ENCODE measurements at regions of chr4 and their contacts with region 1.

Region 1: DNA sequence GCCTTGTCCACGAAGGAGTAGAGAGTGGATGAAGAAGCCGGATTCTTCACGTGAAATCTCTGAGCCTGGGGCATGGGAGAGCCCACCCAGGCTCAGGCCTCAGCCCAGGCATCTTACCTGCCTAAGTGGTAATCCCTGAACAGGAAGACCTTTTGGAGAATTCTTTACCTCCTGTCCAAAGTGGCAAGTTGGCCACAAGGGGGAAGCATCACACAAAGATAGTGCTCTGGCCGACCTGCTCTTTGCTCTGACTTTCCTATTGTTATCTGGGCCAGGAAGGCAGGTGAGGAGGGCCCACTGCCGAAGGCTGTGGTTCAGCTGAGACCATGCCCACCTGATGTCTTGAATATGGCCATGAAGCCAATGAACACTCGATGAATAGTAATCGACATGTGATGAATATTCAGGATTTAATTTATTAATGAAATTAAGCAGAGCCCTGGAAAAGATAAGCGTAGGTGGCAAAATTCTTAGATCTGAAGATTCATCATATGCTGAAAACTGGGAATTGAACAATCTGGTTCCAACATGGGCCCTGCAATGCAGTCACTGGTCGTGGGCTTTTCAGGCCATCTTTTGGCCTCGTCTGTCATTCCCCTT is 93.8 kb downstream of the PDGFRA start:
- DNase-seq: peak; percentile 59
- ATAC-seq: peak; percentile 81
- H3K4me3 ChIP-seq: no peak overlapping the region
- H3K27ac ChIP-seq: no peak overlapping the region
- H3K4me1 ChIP-seq: no peaks in the 10 kb centered on the region
- H3K27me3 ChIP-seq: no peaks in the 10 kb centered on the region
- CTCF ChIP-seq: peak; percentile 72
- POLR2A ChIP-seq: no peak
- RAD21 ChIP-seq: peak; percentile 86

Region 2: GRCh38 chr4:54346445-54346844 is 23.5 kb after region 1 on chr4:
- CTCF ChIA-PET with region 1: no interaction called
- POLR2A ChIA-PET with region 1: no interaction called
- dilution Hi-C with region 1: no loop called
- in situ Hi-C with region 1: no loop called
- intact Hi-C with region 1: no loop called
- DNase-seq: no peak
- ATAC-seq: no peak
- H3K4me3 ChIP-seq: no peak overlapping the region
- H3K27ac ChIP-seq: no peak overlapping the region
- H3K4me1 ChIP-seq: no peaks in the 10 kb centered on the region
- H3K27me3 ChIP-seq: peaks cover 13% of the 10 kb centered on the region
- CTCF ChIP-seq: no peak
- POLR2A ChIP-seq: no peak
- RAD21 ChIP-seq: no peak

Region 3: DNA sequence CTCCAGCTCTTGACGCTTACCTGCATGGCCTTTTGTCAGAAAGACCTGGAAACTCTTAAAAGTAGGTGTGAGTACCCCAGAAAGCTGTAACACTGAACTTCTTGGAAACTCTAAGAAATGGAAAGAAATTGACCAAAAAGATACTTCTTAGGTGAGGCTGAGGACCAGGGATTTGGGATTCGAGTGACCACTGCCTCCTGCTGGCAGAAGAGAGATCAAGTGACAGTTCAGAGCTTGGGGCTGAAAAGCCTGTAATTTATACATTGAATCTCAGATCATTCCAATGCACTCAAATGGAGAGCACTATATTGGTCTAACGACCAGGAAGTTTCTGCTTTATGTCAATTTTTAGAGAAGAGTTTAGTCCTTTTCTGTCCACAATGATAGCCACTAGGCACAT is 110.8 kb after region 1 on chr4:
- CTCF ChIA-PET with region 1: interaction called, 4 read pairs
- POLR2A ChIA-PET with region 1: no interaction called
- dilution Hi-C with region 1: no loop called
- in situ Hi-C with region 1: loop called (anchors 5 kb)
- intact Hi-C with region 1: loop called (anchors 2 kb)
- DNase-seq: peak; percentile 37
- ATAC-seq: peak; percentile 77; the same call in 1 of the 2 replicates
- H3K4me3 ChIP-seq: no peak overlapping the region
- H3K27ac ChIP-seq: no peak overlapping the region
- H3K4me1 ChIP-seq: no peaks in the 10 kb centered on the region
- H3K27me3 ChIP-seq: peaks cover 21% of the 10 kb centered on the region
- CTCF ChIP-seq: peak; percentile 50
- POLR2A ChIP-seq: no peak
- RAD21 ChIP-seq: peak; percentile 52

Region 4: DNA sequence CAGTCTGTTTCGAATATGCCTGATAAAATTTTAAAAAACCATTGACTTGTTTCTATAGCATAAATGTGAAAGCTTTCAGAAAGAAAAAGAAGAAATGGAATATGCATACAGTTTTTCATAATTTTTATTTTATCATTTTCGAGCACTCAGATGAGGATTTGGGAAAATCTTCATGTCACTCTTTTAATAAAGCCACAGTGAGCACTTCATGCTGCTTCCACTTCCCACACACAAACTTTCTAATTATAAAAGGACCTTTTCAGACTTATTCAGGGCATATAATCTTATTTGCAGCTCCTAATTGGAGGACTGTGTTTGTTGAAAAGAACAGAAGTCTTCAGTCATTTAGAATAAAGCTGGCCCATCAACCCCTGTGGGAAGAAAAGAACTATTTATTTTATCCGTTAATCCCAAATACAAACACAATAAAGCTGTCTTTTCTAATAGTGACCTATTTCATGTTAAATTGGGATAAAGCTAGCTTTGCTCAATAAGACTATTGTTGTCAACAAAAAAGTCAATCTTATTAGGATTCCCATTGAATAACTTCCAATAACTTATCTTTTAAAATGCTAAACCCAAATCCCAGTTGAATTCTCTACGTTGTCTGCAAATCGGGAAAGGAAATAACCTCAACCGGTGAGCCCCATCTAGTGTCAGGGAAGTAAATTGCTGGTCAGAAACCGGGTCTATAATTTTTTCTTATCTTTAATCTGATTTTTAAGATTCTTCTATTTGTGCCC is 117.6 kb after region 1 on chr4:
- CTCF ChIA-PET with region 1: interaction called, 4 read pairs
- POLR2A ChIA-PET with region 1: no interaction called
- dilution Hi-C with region 1: no loop called
- in situ Hi-C with region 1: loop called (anchors 5 kb)
- intact Hi-C with region 1: loop called (anchors 1 kb)
- DNase-seq: peak; percentile 34
- ATAC-seq: no peak
- H3K4me3 ChIP-seq: no peak overlapping the region
- H3K27ac ChIP-seq: no peak overlapping the region
- H3K4me1 ChIP-seq: no peaks in the 10 kb centered on the region
- H3K27me3 ChIP-seq: peaks cover 13% of the 10 kb centered on the region
- CTCF ChIP-seq: peak; percentile 61
- POLR2A ChIP-seq: no peak
- RAD21 ChIP-seq: peak; percentile 60

Region 5: GRCh38 chr4:54484383-54484782 is 161.5 kb after region 1 on chr4:
- CTCF ChIA-PET with region 1: no interaction called
- POLR2A ChIA-PET with region 1: no interaction called
- dilution Hi-C with region 1: no loop called
- in situ Hi-C with region 1: no loop called
- intact Hi-C with region 1: no loop called
- DNase-seq: no peak
- ATAC-seq: no peak
- H3K4me3 ChIP-seq: no peak overlapping the region
- H3K27ac ChIP-seq: no peak overlapping the region
- H3K4me1 ChIP-seq: no peaks in the 10 kb centered on the region
- H3K27me3 ChIP-seq: no peaks in the 10 kb centered on the region; the same call in 1 of the 2 replicates
- CTCF ChIP-seq: no peak
- POLR2A ChIP-seq: no peak
- RAD21 ChIP-seq: no peak

Region 6: GRCh38 chr4:54625125-54625790 is 302.3 kb after region 1 on chr4:
- CTCF ChIA-PET with region 1: no interaction called
- POLR2A ChIA-PET with region 1: no interaction called
- dilution Hi-C with region 1: no loop called
- in situ Hi-C with region 1: no loop called
- intact Hi-C with region 1: no loop called
- DNase-seq: no peak
- ATAC-seq: peak; percentile 21; the same call in 1 of the 2 replicates
- H3K4me3 ChIP-seq: no peak overlapping the region
- H3K27ac ChIP-seq: no peak overlapping the region
- H3K4me1 ChIP-seq: no peaks in the 10 kb centered on the region
- H3K27me3 ChIP-seq: peaks cover 13% of the 10 kb centered on the region
- CTCF ChIP-seq: no peak
- POLR2A ChIP-seq: no peak
- RAD21 ChIP-seq: no peak

Region 7: GRCh38 chr4:54658252-54659093 is 335.6 kb after region 1 on chr4:
- CTCF ChIA-PET with region 1: interaction called, 3 read pairs
- POLR2A ChIA-PET with region 1: no interaction called
- dilution Hi-C with region 1: no loop called
- in situ Hi-C with region 1: no loop called
- intact Hi-C with region 1: loop called (anchors 5 kb)
- DNase-seq: peak; percentile 36
- ATAC-seq: peak; percentile 60
- H3K4me3 ChIP-seq: peak overlapping the region; percentile 74
- H3K27ac ChIP-seq: peak overlapping the region; percentile 36; the same call in 1 of the 2 replicates
- H3K4me1 ChIP-seq: peaks cover 16% of the 10 kb centered on the region
- H3K27me3 ChIP-seq: peaks cover 22% of the 10 kb centered on the region
- CTCF ChIP-seq: 0 out of 2 replicates have a peak, but pooled peaks have one; percentile 15
- POLR2A ChIP-seq: no peak
- RAD21 ChIP-seq: no peak

Region 8: GRCh38 chr4:54840992-54841768 is 518.3 kb after region 1 on chr4:
- CTCF ChIA-PET with region 1: no interaction called
- POLR2A ChIA-PET with region 1: no interaction called
- dilution Hi-C with region 1: no loop called
- in situ Hi-C with region 1: no loop called
- intact Hi-C with region 1: loop called (anchors 1 kb)
- DNase-seq: peak; percentile 2
- ATAC-seq: peak; percentile 68
- H3K4me3 ChIP-seq: no peak overlapping the region
- H3K27ac ChIP-seq: no peak overlapping the region
- H3K4me1 ChIP-seq: no peaks in the 10 kb centered on the region; the same call in 1 of the 2 replicates
- H3K27me3 ChIP-seq: peaks cover 3% of the 10 kb centered on the region; the same call in 1 of the 2 replicates
- CTCF ChIP-seq: peak; percentile 29
- POLR2A ChIP-seq: no peak
- RAD21 ChIP-seq: peak; percentile 49

Region 9: DNA sequence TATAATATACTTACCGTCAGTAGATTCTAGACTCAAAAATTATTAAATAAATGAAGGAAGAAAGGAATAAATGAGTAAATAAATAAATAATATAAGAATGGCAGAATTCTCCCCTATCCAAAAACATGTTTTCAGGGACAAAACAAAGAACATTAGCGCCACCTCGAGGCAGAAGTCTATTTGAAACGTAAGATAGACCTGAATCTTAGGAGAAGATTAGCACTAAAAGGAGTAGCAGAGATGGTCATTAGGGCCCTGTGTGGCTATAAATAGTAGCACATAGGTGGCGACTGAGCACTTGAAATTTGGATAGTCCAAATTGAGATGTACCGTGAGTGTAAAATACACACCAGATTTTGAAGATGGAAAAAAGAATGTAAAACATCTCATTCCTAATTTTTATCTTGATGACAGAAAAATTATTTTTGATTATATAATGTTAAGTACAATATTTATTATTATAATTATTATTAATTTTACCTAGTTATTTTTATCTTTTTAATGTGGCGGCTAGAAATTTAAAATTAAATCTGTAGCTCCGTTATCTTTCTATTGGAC is 998.9 kb after region 1 on chr4:
- CTCF ChIA-PET with region 1: no interaction called
- POLR2A ChIA-PET with region 1: no interaction called
- dilution Hi-C with region 1: no loop called
- in situ Hi-C with region 1: loop called (anchors 10 kb)
- intact Hi-C with region 1: loop called (anchors 10 kb)
- DNase-seq: peak; percentile 76
- ATAC-seq: peak; percentile 71
- H3K4me3 ChIP-seq: no peak overlapping the region
- H3K27ac ChIP-seq: no peak overlapping the region
- H3K4me1 ChIP-seq: no peaks in the 10 kb centered on the region
- H3K27me3 ChIP-seq: peaks cover 21% of the 10 kb centered on the region
- CTCF ChIP-seq: peak; percentile 79
- POLR2A ChIP-seq: no peak
- RAD21 ChIP-seq: peak; percentile 82

Measured in IMR-90 (cell line).